ENCODE measurements at regions of chr1 and their contacts with region 1.

Region 1: GRCh38 chr1:169586395-169587255 is at the start of gene F5:
- DNase-seq: peak; percentile 53 to 83 (median 74)
- ATAC-seq: peak; percentile 100
- H3K4me3 ChIP-seq: peak within 1 kb of the TSS; percentile 1 to 32
- H3K4me3 Mint-ChIP-seq: peak within 1 kb of the TSS; percentile 76
- H3K27ac ChIP-seq: no peak within 1 kb of the TSS
- H3K27ac Mint-ChIP-seq: no peak within 1 kb of the TSS
- H3K4me1 ChIP-seq: peaks cover 21% of the 10 kb centered on the region
- H3K4me1 Mint-ChIP-seq: peaks cover 17% of the 10 kb centered on the region
- H3K27me3 ChIP-seq: no peaks in the 10 kb centered on the region
- H3K27me3 Mint-ChIP-seq: peaks cover 12% of the 10 kb centered on the region
- CTCF ChIP-seq: peak; percentile 70
- total RNA-seq, gene F5: 0.28 to 0.30 TPM

Region 2: DNA sequence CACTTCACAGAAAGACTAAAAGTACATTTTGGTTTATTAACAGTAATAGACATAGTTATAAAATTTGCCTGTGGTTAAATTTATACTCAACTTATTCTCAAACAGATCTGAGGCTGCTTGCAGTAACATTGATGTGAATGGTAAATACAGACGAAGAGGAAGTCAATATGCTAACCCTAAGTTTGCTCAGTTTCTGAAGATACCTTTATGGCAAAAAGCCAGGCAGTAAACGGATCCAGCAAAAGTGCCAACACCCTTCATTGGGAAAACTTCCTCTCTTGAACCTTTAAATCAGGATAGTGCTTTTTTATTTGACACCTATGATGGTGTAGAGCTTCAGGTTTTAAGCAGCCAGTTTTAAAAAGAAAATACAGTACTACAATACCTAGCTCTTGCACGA is 142.7 kb before region 1 on chr1:
- CTCF ChIA-PET with region 1: no interaction called
- POLR2A ChIA-PET with region 1: no interaction called
- intact Hi-C with region 1: no loop called
- DNase-seq: no peak
- ATAC-seq: no peak
- H3K4me3 ChIP-seq: no peak overlapping the region
- H3K4me3 Mint-ChIP-seq: no peak overlapping the region
- H3K27ac ChIP-seq: no peak overlapping the region
- H3K27ac Mint-ChIP-seq: no peak overlapping the region
- H3K4me1 ChIP-seq: no peaks in the 10 kb centered on the region
- H3K4me1 Mint-ChIP-seq: no peaks in the 10 kb centered on the region
- H3K27me3 ChIP-seq: no peaks in the 10 kb centered on the region
- H3K27me3 Mint-ChIP-seq: peaks cover 5% of the 10 kb centered on the region
- CTCF ChIP-seq: no peak

Region 3: DNA sequence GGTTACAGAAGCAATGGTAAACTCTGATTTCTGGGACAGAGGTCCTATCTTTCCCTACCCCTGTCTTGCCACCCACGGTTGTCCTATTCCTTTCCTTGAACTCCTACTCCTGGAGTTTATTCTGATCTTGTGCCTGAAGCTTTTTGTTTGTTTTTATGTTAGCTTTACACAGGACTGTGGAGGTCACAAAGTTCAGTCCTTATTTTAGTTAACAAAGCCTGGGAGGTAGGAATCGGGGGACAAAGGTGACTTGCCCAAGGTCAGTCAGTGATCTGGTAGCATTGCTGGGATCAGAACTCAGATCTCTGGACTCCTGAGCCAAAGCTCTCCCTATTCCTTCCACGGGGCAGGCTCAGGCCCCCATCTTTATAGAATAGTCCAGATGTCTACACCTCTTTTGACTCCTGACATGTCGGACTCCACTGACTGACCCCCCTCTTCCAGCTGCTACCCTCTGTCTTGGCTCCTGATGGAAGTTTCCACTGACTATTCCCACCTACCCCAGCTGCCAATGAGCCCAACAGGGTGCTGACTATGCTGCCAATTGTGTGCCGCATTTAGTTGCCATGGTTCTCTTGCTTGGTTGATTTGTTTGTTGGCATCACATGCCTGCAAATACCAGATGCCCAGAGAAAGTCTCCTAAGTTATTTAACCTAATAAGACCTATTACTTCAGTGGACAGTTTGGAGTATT is 10.2 kb before region 1 on chr1:
- CTCF ChIA-PET with region 1: interaction called, 11 read pairs
- POLR2A ChIA-PET with region 1: no interaction called
- intact Hi-C with region 1: no loop called
- DNase-seq: no peak
- ATAC-seq: no peak
- H3K4me3 ChIP-seq: no peak overlapping the region
- H3K4me3 Mint-ChIP-seq: no peak overlapping the region
- H3K27ac ChIP-seq: no peak overlapping the region
- H3K27ac Mint-ChIP-seq: no peak overlapping the region
- H3K4me1 ChIP-seq: no peaks in the 10 kb centered on the region
- H3K4me1 Mint-ChIP-seq: peaks cover 7% of the 10 kb centered on the region
- H3K27me3 ChIP-seq: no peaks in the 10 kb centered on the region
- H3K27me3 Mint-ChIP-seq: peaks cover 3% of the 10 kb centered on the region
- CTCF ChIP-seq: no peak

Region 4: GRCh38 chr1:169701261-169702005 is 114.8 kb after region 1 on chr1:
- CTCF ChIA-PET with region 1: interaction called, 18 read pairs
- POLR2A ChIA-PET with region 1: interaction called, 6 read pairs
- intact Hi-C with region 1: no loop called
- DNase-seq: peak in 2 of 9 experiments; percentile 27 to 67
- ATAC-seq: peak; percentile 78
- H3K4me3 ChIP-seq: peak overlapping the region in 1 of 2 experiments; percentile 1
- H3K4me3 Mint-ChIP-seq: peak overlapping the region; percentile 73
- H3K27ac ChIP-seq: peak overlapping the region; percentile 19 to 54
- H3K27ac Mint-ChIP-seq: peak overlapping the region; percentile 91
- H3K4me1 ChIP-seq: peaks cover 99% of the 10 kb centered on the region
- H3K4me1 Mint-ChIP-seq: peaks cover 96% of the 10 kb centered on the region
- H3K27me3 ChIP-seq: no peaks in the 10 kb centered on the region
- H3K27me3 Mint-ChIP-seq: no peaks in the 10 kb centered on the region
- CTCF ChIP-seq: peak; percentile 16

Region 5: DNA sequence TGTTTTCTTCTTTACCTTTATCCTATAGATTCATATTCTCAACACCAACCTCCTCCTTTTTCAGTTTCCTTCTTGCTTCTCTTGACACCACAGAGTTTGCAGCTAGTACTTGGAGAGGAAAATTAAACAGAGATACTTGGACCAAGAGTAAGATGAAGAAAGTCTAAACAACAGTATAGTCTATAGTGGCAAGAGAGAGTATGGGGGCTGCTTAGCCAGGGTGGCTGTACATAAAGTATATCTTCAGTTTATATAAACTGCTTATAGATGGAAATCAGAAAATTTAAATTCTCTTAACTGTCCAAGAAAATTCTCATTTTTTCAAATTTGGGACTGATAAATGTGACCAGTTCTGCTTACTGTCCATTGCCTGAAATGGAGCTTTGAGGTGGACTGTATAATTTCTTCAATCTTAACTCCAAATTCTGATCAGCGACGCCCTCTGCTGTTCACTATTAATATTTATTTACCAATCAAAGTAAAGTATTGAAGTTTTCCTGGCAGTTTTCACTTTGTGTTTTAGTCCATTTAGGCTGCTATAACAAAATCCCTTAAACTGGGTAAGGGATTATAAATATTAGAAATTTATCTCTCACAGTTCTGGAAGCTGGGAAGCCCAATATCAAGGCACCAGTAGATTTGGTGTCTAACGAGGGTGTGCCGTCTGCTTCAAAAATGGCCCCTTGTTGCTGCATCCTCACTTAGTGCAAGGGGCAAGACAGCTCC is 222.9 kb after region 1 on chr1:
- CTCF ChIA-PET with region 1: interaction called, 15 read pairs
- POLR2A ChIA-PET with region 1: no interaction called
- intact Hi-C with region 1: loop called (anchors 1 to 2 kb)
- DNase-seq: peak in 3 of 9 experiments; percentile 34 to 59 (median 52)
- ATAC-seq: no peak
- H3K4me3 ChIP-seq: no peak overlapping the region
- H3K4me3 Mint-ChIP-seq: no peak overlapping the region
- H3K27ac ChIP-seq: no peak overlapping the region
- H3K27ac Mint-ChIP-seq: no peak overlapping the region
- H3K4me1 ChIP-seq: no peaks in the 10 kb centered on the region
- H3K4me1 Mint-ChIP-seq: peaks cover 2% of the 10 kb centered on the region
- H3K27me3 ChIP-seq: no peaks in the 10 kb centered on the region
- H3K27me3 Mint-ChIP-seq: no peaks in the 10 kb centered on the region
- CTCF ChIP-seq: peak; percentile 71

Measured in CD8-positive, alpha-beta T cell (primary cell).